ENCODE measurements at regions of chr14 and their contacts with region 1.

Region 1: DNA sequence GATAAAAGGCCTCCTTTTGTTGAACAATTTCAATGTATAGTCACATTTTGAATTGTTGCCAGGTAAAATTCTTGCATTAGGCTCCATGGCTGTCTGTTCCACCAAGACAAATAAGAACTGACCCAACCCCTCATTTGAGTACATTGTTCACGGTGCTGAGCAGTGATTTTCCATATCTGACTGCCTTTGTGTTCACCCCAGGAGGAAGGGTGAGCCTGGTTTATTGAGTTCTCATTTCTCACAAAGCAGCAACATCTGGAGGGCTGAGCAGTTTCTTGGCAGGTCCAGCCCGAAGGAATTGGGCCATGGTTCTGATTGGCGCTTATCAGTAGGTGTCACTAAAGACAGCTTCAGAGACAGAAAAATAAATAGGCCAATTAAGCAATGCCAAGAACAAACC is 149.1 kb downstream of the BMP4 start:
- DNase-seq: peak in 1 of 2 donors; percentile 62
- H3K4me3 ChIP-seq: no peak overlapping the region
- CTCF ChIP-seq: no peak
- POLR2A ChIP-seq: no peak

Region 2: GRCh38 chr14:53564870-53565269 is 242.7 kb before region 1 on chr14:
- intact Hi-C with region 1: no loop called
- DNase-seq: no peak
- H3K4me3 ChIP-seq: no peak overlapping the region
- CTCF ChIP-seq: no peak
- POLR2A ChIP-seq: no peak

Region 3: DNA sequence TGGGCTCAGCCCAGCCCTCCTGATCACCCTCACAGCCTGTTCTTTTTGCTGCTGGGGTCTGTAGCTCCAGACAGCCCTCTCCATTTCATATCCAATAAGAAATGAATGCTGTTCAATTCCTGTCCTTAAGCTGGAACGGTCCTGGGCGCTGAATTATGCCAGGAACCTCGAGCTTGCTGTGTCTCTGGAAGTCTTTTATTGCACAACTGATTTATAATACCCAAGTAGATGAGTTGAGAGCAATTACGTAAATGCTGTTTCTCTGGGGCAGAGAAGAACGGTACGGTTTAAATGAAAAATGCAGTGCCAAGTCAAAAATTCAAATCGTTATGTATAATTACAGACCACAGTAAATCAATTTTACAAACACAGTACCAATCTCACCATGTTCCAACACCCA is 920.4 kb after region 1 on chr14:
- intact Hi-C with region 1: loop called (anchors 5 kb)
- DNase-seq: peak; percentile 43 to 88
- H3K4me3 ChIP-seq: no peak overlapping the region
- CTCF ChIP-seq: no peak
- POLR2A ChIP-seq: no peak

Measured in lower leg skin (tissue), 4 donors.